Activated T-helper 1 cell treated with anti-CD3 and anti-CD28 coated beads, Interleukin-12 subunit alpha, Interleukin-12 subunit beta, Interleukin-2, Interleukin-4 antibody, amounts not matched to agents 30 ng/mL and 10 ng/mL and 1 ng/mL, durations not matched to agents 14 hours and 24 hours and 36 hours (primary cell): ENCODE measurements at regions of chr20 and their contacts with region 1.

Region 1: DNA sequence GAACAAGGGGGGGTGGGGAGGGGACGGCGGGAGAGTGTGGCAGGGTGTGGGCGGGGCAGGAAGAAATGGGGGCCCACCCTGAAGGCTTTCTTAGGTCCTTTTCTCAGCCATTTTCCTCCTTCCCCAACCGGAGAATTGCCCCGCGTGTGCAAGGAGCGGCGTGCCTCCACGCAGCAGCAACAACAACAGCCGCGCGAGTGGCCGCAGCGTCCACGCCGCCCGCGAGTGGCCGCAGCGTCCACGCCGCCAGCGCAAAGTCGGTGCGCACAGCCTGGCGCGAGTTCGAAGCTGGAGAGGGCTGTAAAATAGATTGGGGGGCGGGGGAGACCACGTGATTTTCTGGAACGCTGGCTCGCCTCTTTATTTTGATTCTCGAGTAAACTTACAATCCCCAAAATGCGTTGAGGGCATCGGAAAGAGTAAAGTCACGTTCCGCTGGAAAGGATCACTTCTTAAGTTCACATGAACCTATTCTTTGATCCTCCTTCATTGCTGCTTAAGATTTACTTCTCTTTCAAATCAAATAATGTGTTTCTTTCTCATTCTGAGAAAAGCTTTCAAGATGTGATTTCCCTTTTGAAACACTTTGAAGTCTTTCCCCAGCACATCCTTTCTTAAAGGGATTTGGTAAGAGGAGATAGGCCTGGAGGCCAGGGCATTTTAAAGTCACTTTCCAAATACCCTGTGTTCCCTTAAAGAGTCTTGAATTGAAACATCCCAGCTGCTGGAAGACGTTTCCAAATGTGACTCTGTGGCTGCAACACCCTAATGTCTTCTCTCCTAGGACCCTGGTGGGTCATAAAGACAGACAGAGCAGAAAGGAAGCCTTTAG is 66.7 kb upstream of the ZNF217 start:
- DNase-seq: no peak
- H3K4me3 Mint-ChIP-seq: peak overlapping the region; percentile 75
- H3K27ac Mint-ChIP-seq: peak overlapping the region; percentile 87
- H3K4me1 Mint-ChIP-seq: peaks cover 71% of the 10 kb centered on the region
- H3K27me3 Mint-ChIP-seq: no peaks in the 10 kb centered on the region

Region 2: GRCh38 chr20:53116733-53117132 is 543.6 kb before region 1 on chr20:
- intact Hi-C with region 1: no loop called
- DNase-seq: no peak
- H3K4me3 Mint-ChIP-seq: no peak overlapping the region
- H3K27ac Mint-ChIP-seq: no peak overlapping the region
- H3K4me1 Mint-ChIP-seq: peaks cover 1% of the 10 kb centered on the region
- H3K27me3 Mint-ChIP-seq: peaks cover 1% of the 10 kb centered on the region

Region 3: DNA sequence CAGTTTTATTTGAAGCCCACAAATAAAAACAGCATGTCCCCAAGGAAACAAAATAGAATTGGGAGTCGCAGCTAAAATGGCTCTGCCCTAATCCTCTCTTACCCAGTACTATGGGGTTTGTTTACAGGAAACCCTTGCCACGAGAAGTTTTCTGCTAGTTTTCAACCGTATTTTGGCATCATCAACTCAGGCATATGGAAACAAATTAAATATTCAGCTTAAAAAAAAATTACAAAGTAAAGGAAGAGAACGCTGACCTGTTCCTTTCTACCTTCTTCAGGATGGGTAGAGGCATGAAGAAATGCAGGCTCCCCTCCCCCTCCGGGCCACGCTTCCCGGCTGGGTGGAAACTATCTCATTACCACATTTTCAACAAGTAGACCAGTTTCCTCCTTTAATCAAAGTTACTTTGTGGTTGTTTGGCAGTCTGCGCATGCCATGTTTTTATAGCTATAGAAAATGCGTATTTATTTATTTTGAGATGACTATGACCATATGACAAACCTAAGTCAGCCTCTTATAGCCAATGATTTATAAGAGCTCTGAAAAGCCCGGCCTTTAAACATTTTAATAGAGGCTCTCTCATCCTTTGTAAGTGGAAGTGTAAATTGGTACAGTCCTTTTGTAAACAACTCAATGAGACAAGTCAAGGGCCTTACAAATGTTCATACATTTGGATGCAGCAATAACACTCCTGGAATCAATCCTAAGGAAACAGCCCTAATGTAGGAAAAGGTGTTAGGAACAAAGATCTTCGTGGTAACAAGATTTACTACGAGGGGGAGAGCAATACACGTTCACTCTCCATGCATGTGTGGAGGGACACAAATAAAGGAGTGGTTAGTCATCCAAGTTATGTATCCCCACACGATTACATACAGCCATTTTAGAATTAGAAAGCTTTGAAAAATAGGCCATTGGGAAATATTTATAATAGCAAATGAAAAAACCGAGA is 50.5 kb before region 1 on chr20:
- intact Hi-C with region 1: loop called (anchors 1 kb)
- DNase-seq: peak; percentile 68
- H3K4me3 Mint-ChIP-seq: peak overlapping the region; percentile 85
- H3K27ac Mint-ChIP-seq: peak overlapping the region; percentile 94
- H3K4me1 Mint-ChIP-seq: peaks cover 30% of the 10 kb centered on the region
- H3K27me3 Mint-ChIP-seq: no peaks in the 10 kb centered on the region

Region 4: DNA sequence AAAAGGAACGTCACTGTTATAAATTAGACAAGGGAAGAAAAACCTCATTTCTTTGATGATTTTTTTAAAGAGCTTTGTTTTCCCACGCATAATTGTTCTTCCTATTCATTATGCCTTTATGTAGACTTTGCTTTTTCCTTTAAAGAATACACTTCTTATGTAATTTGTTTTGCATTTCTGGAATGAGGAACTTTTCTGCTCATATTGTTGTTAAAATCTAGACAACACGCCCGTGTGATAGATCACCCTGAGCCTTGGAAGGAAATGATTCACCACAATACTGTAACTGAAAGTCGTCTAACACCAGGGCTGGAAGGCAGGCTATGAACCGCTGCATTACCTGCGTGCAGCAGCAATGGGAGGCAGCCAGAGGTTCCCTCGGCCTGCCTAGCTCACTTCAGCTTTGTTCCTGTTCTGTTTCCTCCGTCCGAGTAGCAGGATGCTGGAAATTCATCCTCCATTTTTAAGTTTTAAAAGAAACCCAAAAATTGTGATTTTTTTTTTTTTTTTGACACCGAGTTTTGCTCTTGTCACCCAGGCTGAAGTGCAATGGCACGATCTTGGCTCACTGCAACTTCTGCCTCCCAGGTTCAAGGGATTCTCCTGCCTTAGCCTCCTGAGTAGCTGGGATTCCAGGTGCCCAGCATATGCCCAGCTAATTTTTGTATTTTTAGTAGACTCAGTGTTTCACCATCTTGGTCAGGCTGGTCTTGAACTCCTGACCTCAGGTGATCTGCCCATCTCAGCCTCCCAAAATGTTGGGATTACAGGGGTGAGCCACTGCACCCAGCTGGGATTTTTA is 17.1 kb before region 1 on chr20:
- intact Hi-C with region 1: loop called (anchors 1 kb)
- DNase-seq: peak; percentile 66
- H3K4me3 Mint-ChIP-seq: peak overlapping the region; percentile 76
- H3K27ac Mint-ChIP-seq: peak overlapping the region; percentile 97
- H3K4me1 Mint-ChIP-seq: peaks cover 39% of the 10 kb centered on the region
- H3K27me3 Mint-ChIP-seq: no peaks in the 10 kb centered on the region

Region 5: DNA sequence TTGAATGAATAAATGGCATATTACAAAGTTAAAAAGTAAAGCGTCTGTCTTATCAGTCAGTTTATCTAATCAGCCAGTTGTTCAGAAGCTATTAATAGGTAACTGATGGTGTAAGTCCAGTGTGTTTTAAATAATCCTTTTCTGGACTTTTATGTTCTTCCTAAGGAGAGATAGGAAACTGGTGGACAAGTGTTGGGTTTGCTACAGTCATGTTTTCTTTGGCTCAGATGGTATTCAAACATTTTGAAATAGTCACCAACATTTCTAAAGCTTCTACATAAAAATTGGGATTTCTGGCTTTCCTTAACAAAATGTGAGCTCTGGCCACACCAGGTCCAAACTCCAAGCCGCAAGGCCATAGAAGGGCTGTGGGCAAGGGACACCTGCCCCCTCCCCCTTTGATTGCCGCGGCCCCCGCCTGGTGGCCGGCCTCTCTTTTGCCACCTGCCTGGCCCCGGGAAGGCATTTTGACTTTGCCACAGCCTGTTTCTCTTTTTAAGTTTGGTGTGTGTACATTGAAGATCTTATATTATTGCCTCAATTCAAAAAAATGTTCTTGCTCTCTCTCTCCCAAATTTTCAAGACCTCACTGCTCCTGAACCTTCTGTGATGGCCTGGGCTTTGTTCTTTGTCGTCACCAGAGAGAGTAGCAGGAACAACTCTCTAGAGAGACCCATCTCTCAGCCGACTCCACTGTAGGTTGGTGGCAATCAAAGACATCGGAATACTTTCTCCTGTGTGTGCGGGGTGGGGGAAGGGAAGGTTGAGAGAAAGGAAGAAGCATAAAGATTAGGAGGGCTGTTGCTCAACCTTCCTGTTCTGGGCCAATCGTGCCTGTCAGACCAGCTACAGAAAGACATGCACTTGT is 17.4 kb after region 1 on chr20:
- intact Hi-C with region 1: loop called (anchors 1 kb)
- DNase-seq: no peak
- H3K4me3 Mint-ChIP-seq: peak overlapping the region; percentile 67
- H3K27ac Mint-ChIP-seq: peak overlapping the region; percentile 26
- H3K4me1 Mint-ChIP-seq: peaks cover 22% of the 10 kb centered on the region
- H3K27me3 Mint-ChIP-seq: no peaks in the 10 kb centered on the region

Region 6: GRCh38 chr20:53974785-53975555 is 314.7 kb after region 1 on chr20:
- intact Hi-C with region 1: no loop called
- DNase-seq: no peak
- H3K4me3 Mint-ChIP-seq: no peak overlapping the region
- H3K27ac Mint-ChIP-seq: no peak overlapping the region
- H3K4me1 Mint-ChIP-seq: no peaks in the 10 kb centered on the region
- H3K27me3 Mint-ChIP-seq: no peaks in the 10 kb centered on the region